PC-9 (cell line): ENCODE measurements at regions of chrX and their contacts with region 1.

Region 1: GRCh38 chrX:133838761-133839676 is 146.4 kb downstream of the GPC3 start:
- DNase-seq: peak in 1 of 2 experiments; percentile 5
- H3K4me3 ChIP-seq: no peak overlapping the region
- H3K27ac ChIP-seq: no peak overlapping the region
- H3K4me1 ChIP-seq: no peaks in the 10 kb centered on the region
- H3K27me3 ChIP-seq: no peaks in the 10 kb centered on the region
- CTCF ChIP-seq: peak; percentile 84

Region 2: GRCh38 chrX:133307637-133308500 is 531.1 kb before region 1 on chrX:
- CTCF ChIA-PET with region 1: no interaction called
- POLR2A ChIA-PET with region 1: no interaction called
- intact Hi-C with region 1: no loop called
- DNase-seq: no peak
- H3K4me3 ChIP-seq: no peak overlapping the region
- H3K27ac ChIP-seq: no peak overlapping the region
- H3K4me1 ChIP-seq: no peaks in the 10 kb centered on the region
- H3K27me3 ChIP-seq: 0 out of 2 replicates have a peak, but pooled peaks cover 4% of the 10 kb centered on the region
- CTCF ChIP-seq: no peak

Region 3: GRCh38 chrX:133818019-133818418 is 21.0 kb before region 1 on chrX:
- CTCF ChIA-PET with region 1: no interaction called
- POLR2A ChIA-PET with region 1: no interaction called
- intact Hi-C with region 1: loop called (anchors 1 kb)
- DNase-seq: no peak
- H3K4me3 ChIP-seq: no peak overlapping the region
- H3K27ac ChIP-seq: no peak overlapping the region
- H3K4me1 ChIP-seq: no peaks in the 10 kb centered on the region
- H3K27me3 ChIP-seq: no peaks in the 10 kb centered on the region
- CTCF ChIP-seq: no peak